ENCODE measurements at regions of chr21 and their contacts with region 1.

Region 1: GRCh38 chr21:32753818-32754610 is 17.5 kb downstream of the PAXBP1 start:
- H3K4me3 ChIP-seq: no peak overlapping the region
- H3K27ac ChIP-seq: no peak overlapping the region
- H3K4me1 ChIP-seq: no peaks in the 10 kb centered on the region
- CTCF ChIP-seq: no peak

Region 2: GRCh38 chr21:32653311-32653901 is 100.6 kb before region 1 on chr21:
- CTCF ChIA-PET with region 1: interaction called, 12 read pairs
- POLR2A ChIA-PET with region 1: no interaction called
- H3K4me3 ChIP-seq: no peak overlapping the region
- H3K27ac ChIP-seq: no peak overlapping the region
- H3K4me1 ChIP-seq: no peaks in the 10 kb centered on the region
- CTCF ChIP-seq: no peak

Region 3: GRCh38 chr21:32770871-32771523 is 17.0 kb after region 1 on chr21:
- CTCF ChIA-PET with region 1: interaction called, 3 read pairs
- POLR2A ChIA-PET with region 1: interaction called, 24 read pairs
- H3K4me3 ChIP-seq: peak overlapping the region; percentile 84
- H3K27ac ChIP-seq: peak overlapping the region; percentile 96
- H3K4me1 ChIP-seq: peaks cover 8% of the 10 kb centered on the region
- CTCF ChIP-seq: peak; percentile 56; the same call in 1 of the 2 replicates

Measured in HEK293 (cell line).